ENCODE measurements at regions of chr11 and their contacts with region 1.

Region 1: GRCh38 chr11:76860539-76861475 is at the start of gene ACER3:
- DNase-seq: peak; percentile 93
- H3K4me3 Mint-ChIP-seq: peak within 1 kb of the TSS; percentile 92
- H3K27ac Mint-ChIP-seq: peak within 1 kb of the TSS; percentile 24
- H3K4me1 Mint-ChIP-seq: peaks cover 23% of the 10 kb centered on the region
- H3K27me3 Mint-ChIP-seq: no peaks in the 10 kb centered on the region
- CTCF ChIP-seq: no peak
- total RNA-seq, gene ACER3: 19.9 and 21.0 TPM in 2 replicates

Region 2: DNA sequence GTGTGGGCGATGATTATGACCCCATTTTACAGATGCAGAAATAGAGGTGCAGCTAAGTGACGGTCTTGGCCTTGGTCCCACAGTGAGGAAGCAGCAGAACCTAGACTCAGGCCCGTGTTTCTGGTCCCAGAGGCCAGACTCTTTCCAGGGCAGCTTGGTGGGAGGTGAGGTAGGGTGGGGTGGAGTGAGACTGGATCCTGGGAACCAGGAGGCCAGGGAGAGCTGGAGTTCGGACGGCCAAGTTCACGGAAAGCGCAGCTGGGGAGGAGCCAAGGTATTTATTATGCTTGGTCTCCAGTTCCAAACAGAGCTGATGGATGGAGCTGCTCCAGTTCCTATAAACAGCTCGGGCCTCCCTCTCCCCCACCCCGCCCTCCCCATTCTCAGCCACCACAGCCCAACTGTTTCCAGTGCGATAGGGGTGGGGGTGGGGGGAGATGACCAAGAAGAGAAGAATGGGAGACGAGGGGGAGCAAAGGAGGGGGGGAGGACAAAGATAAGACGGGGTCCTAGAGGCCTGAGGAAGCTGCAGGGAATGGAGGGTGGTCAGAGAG is 206.4 kb before region 1 on chr11:
- CTCF ChIA-PET with region 1: no interaction called
- intact Hi-C with region 1: no loop called
- DNase-seq: no peak
- H3K4me3 Mint-ChIP-seq: no peak overlapping the region
- H3K27ac Mint-ChIP-seq: no peak overlapping the region
- H3K4me1 Mint-ChIP-seq: no peaks in the 10 kb centered on the region
- H3K27me3 Mint-ChIP-seq: peaks cover 79% of the 10 kb centered on the region
- CTCF ChIP-seq: no peak

Region 3: DNA sequence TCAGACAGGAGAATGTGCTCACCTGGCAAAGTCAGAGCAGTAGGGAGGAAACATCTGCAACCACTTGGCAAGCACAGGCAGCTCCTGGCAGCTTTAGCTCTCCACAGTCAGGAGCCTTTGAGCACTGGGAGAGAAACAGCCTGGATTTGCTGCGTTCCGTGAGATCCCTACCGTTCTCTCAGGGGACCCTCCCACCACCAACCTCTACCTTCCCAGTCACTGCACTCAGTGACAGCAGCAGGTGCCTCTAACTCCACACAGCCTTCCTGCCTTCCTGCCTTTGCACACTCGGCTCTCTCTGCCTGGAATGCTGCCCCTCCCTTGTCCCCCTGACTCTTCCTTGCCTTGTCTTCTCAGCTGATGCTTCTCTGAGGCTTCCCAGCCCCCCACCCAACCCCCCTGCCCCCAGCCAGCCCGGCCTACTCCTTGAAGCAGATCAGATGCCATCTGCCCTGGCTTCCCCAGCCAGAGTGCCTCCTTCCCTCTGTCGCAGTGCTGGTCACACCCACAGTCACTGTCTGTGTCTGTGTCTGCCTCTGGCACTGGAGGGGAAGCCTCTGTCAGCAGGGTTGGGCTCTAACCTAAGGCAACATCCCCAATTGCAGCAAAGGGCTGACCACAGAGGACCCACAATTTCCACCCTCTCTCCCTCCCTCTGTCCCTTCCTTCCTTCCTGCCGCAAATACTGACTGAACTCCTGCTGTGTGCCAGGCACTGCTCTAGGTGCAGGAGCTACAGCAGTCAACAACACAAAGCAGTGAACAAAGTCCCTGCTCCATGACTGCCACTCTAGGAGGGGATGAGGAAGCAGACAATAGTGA is 92.5 kb before region 1 on chr11:
- CTCF ChIA-PET with region 1: no interaction called
- intact Hi-C with region 1: no loop called
- DNase-seq: no peak
- H3K4me3 Mint-ChIP-seq: peak overlapping the region; percentile 50
- H3K27ac Mint-ChIP-seq: peak overlapping the region; percentile 68
- H3K4me1 Mint-ChIP-seq: peaks cover 50% of the 10 kb centered on the region
- H3K27me3 Mint-ChIP-seq: no peaks in the 10 kb centered on the region
- CTCF ChIP-seq: no peak

Region 4: DNA sequence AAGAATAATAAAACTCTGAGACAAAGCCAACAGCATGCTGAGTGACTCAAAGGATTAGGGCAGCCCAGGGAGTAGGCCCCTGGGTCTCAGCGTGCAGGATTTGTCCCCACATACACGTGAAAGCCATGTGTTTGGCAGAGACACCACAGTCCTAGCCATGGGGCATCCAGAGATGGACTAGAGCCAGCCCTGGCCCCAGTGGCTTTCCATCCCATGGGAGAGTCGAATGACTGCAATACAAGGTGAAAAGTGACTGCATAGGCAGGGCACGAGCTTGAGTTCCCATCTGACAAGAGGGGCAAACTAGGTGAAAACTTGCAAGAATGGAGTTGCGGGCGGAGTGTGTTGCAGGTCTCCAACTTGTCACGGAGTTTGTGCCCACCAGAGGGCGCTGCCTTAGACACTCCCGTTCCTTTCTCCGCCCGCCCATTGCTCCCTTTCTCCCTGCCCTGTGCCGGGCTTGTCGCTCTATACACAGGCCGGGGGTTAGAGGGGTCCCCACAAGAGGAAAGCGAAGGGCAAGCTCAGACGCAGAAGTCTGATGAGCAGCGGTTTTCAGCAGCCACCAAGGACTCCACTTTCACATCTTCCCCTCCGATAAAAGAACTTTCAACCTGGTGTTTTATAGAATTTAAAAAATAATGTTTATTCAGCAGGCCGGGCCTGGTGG is 53.5 kb before region 1 on chr11:
- CTCF ChIA-PET with region 1: no interaction called
- intact Hi-C with region 1: loop called (anchors 2 kb)
- DNase-seq: peak; percentile 90
- H3K4me3 Mint-ChIP-seq: no peak overlapping the region
- H3K27ac Mint-ChIP-seq: peak overlapping the region; percentile 17
- H3K4me1 Mint-ChIP-seq: peaks cover 19% of the 10 kb centered on the region
- H3K27me3 Mint-ChIP-seq: no peaks in the 10 kb centered on the region
- CTCF ChIP-seq: peak; percentile 87

Region 5: DNA sequence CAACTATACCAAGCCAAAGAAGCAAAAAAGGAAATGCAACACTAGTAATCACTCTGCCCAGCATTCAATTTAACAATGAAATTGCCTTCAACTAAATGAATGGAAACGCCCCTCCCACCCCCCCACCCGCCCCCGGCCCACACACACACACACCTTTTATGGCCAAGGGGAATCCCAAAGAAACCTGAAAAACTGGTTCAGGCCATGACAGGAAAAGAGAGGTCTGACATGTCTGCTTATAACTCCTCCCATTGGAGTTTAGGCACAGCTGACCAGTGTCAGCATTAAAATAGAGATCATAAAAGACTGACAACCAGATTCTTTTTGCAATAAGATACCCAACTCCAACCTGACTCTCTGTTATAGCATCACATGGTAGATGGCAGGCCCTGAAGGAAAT is 42.5 kb after region 1 on chr11:
- CTCF ChIA-PET with region 1: no interaction called
- intact Hi-C with region 1: loop called (anchors 5 kb)
- DNase-seq: peak; percentile 42
- H3K4me3 Mint-ChIP-seq: no peak overlapping the region
- H3K27ac Mint-ChIP-seq: peak overlapping the region; percentile 72
- H3K4me1 Mint-ChIP-seq: peaks cover 11% of the 10 kb centered on the region
- H3K27me3 Mint-ChIP-seq: no peaks in the 10 kb centered on the region
- CTCF ChIP-seq: no peak